Naive thymus-derived CD4-positive, alpha-beta T cell (primary cell): ENCODE measurements at regions of chr3 and their contacts with region 1.

Region 1: GRCh38 chr3:107522510-107523288 is at the start of gene BBX:
- DNase-seq: peak; percentile 88 to 97 (median 97)
- ATAC-seq: peak; percentile 95
- H3K4me3 ChIP-seq: peak within 1 kb of the TSS; percentile 82
- H3K4me3 Mint-ChIP-seq: peak within 1 kb of the TSS; percentile 75 to 100 (median 98)
- H3K27ac ChIP-seq: peak within 1 kb of the TSS; percentile 91
- H3K27ac Mint-ChIP-seq: peak within 1 kb of the TSS; percentile 84 to 99 (median 97)
- H3K4me1 ChIP-seq: peaks cover 9 to 14% of the 10 kb centered on the region in 2 donors
- H3K4me1 Mint-ChIP-seq: peaks cover 17 to 35% (median 30%) of the 10 kb centered on the region in 7 donors
- H3K27me3 ChIP-seq: no peaks in the 10 kb centered on the region
- H3K27me3 Mint-ChIP-seq: peaks cover 0 to 2% (median 0%) of the 10 kb centered on the region in 5 donors
- total RNA-seq, gene BBX: 44.3 to 103 (median 73.5) TPM

Region 2: DNA sequence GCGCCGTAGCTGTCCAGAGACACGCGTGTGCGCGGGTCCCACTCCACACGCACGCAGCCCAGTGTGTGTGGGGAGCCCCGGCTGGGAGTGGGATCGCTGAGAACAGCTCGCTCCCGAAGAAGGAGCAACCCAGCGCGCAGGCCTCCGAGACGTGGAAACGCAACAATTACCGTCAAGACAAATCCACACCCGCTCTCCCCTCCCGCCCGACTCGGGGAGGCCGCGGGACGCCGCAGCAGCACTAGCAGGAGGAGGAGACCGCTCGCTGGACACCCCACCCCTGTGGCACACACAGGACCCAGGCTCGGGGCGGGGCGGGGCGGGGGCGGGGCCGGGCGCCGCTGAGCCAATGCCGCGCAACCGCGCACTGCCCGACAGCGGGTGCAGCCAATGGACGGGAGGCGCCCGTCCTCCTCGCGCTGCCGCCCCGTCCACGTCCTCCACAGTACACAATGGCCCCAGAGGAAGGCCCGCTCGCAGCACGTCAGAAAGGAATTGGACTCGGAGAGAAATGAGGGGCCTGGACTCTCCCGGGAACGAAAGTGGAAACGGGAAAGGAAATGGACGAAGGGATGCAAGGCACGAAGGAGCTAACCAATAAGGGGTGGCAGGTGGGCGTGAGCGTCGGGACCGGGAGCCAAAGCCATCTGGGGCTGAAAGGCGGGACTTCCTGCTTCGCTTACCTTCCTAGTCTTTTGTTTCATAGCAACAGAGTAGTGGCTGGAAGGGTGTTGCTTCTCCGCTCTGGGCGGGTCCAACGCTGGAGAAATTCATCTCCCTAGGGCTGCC is 1653.8 kb before region 1 on chr3 and contains the start of gene CBLB:
- CTCF ChIA-PET with region 1: no interaction called
- POLR2A ChIA-PET with region 1: no interaction called
- intact Hi-C with region 1: loop called in 1 of 2 experiments (anchors 5 kb)
- DNase-seq: peak; percentile 72 to 89 (median 85)
- ATAC-seq: peak; percentile 93
- H3K4me3 ChIP-seq: peak within 1 kb of the TSS; percentile 86
- H3K4me3 Mint-ChIP-seq: peak within 1 kb of the TSS; percentile 89 to 100 (median 97)
- H3K27ac ChIP-seq: peak within 1 kb of the TSS; percentile 91
- H3K27ac Mint-ChIP-seq: peak within 1 kb of the TSS; percentile 89 to 98 (median 94)
- H3K4me1 ChIP-seq: peaks cover 31 to 41% of the 10 kb centered on the region in 2 donors
- H3K4me1 Mint-ChIP-seq: peaks cover 23 to 58% (median 49%) of the 10 kb centered on the region in 7 donors
- H3K27me3 ChIP-seq: no peaks in the 10 kb centered on the region
- H3K27me3 Mint-ChIP-seq: no peaks in the 10 kb centered on the region
- total RNA-seq, gene CBLB: 82.8 to 135 (median 109) TPM

Region 3: DNA sequence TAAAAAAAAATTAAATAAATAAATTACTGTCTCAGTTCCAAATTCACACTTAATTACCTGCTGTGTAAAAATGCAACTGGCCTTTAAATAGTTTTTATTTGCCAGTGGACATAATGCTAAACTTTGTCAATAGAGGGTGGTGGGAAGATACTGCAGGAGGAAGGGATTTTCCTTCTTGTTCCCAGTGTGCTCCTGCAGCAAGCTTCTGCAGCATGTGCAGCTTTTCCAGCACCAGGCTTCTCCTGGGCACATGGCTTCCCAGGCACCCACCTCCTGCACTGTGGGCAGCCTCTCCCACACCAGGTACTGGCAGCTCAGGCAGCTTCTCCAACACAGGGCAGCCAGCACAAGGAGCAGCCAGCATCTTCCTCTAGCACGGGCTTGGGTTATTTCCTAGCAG is 29.6 kb before region 1 on chr3:
- CTCF ChIA-PET with region 1: no interaction called
- POLR2A ChIA-PET with region 1: no interaction called
- intact Hi-C with region 1: loop called in 1 of 2 experiments (anchors 2 kb)
- DNase-seq: no peak
- ATAC-seq: no peak
- H3K4me3 ChIP-seq: no peak overlapping the region
- H3K4me3 Mint-ChIP-seq: no peak overlapping the region
- H3K27ac ChIP-seq: no peak overlapping the region
- H3K27ac Mint-ChIP-seq: no peak overlapping the region
- H3K4me1 ChIP-seq: no peaks in the 10 kb centered on the region
- H3K4me1 Mint-ChIP-seq: peaks cover 0 to 4% (median 0%) of the 10 kb centered on the region in 7 donors
- H3K27me3 ChIP-seq: no peaks in the 10 kb centered on the region
- H3K27me3 Mint-ChIP-seq: peaks cover 0 to 19% (median 7%) of the 10 kb centered on the region in 5 donors

Region 4: GRCh38 chr3:107598926-107599771 is 76.5 kb after region 1 on chr3:
- CTCF ChIA-PET with region 1: no interaction called
- POLR2A ChIA-PET with region 1: interaction called, 6 read pairs
- intact Hi-C with region 1: loop called (anchors 1 kb)
- DNase-seq: peak in 8 of 9 donors; percentile 36 to 59 (median 50)
- ATAC-seq: peak; percentile 93
- H3K4me3 ChIP-seq: peak overlapping the region; percentile 56
- H3K4me3 Mint-ChIP-seq: peak overlapping the region; percentile 79 to 91 (median 86)
- H3K27ac ChIP-seq: peak overlapping the region; percentile 76
- H3K27ac Mint-ChIP-seq: peak overlapping the region; percentile 80 to 90 (median 87)
- H3K4me1 ChIP-seq: peaks cover 24 to 39% of the 10 kb centered on the region in 2 donors
- H3K4me1 Mint-ChIP-seq: peaks cover 45 to 81% (median 72%) of the 10 kb centered on the region in 7 donors
- H3K27me3 ChIP-seq: no peaks in the 10 kb centered on the region
- H3K27me3 Mint-ChIP-seq: no peaks in the 10 kb centered on the region

Region 5: GRCh38 chr3:107927361-107928083 is 404.8 kb after region 1 on chr3:
- CTCF ChIA-PET with region 1: no interaction called
- POLR2A ChIA-PET with region 1: no interaction called
- intact Hi-C with region 1: loop called in 1 of 2 experiments (anchors 5 kb)
- DNase-seq: peak; percentile 39 to 71 (median 57)
- ATAC-seq: peak; percentile 92
- H3K4me3 ChIP-seq: peak overlapping the region; percentile 60
- H3K4me3 Mint-ChIP-seq: peak overlapping the region; percentile 86 to 93 (median 89)
- H3K27ac ChIP-seq: no peak overlapping the region
- H3K27ac Mint-ChIP-seq: peak overlapping the region in 5 of 9 donors; percentile 26 to 88 (median 64)
- H3K4me1 ChIP-seq: peaks cover 5 to 6% of the 10 kb centered on the region in 2 donors
- H3K4me1 Mint-ChIP-seq: peaks cover 9 to 15% (median 13%) of the 10 kb centered on the region in 7 donors
- H3K27me3 ChIP-seq: peaks cover 0 to under 1% of the 10 kb centered on the region in 2 donors
- H3K27me3 Mint-ChIP-seq: peaks cover 0 to 17% (median 4%) of the 10 kb centered on the region in 5 donors

Region 6: DNA sequence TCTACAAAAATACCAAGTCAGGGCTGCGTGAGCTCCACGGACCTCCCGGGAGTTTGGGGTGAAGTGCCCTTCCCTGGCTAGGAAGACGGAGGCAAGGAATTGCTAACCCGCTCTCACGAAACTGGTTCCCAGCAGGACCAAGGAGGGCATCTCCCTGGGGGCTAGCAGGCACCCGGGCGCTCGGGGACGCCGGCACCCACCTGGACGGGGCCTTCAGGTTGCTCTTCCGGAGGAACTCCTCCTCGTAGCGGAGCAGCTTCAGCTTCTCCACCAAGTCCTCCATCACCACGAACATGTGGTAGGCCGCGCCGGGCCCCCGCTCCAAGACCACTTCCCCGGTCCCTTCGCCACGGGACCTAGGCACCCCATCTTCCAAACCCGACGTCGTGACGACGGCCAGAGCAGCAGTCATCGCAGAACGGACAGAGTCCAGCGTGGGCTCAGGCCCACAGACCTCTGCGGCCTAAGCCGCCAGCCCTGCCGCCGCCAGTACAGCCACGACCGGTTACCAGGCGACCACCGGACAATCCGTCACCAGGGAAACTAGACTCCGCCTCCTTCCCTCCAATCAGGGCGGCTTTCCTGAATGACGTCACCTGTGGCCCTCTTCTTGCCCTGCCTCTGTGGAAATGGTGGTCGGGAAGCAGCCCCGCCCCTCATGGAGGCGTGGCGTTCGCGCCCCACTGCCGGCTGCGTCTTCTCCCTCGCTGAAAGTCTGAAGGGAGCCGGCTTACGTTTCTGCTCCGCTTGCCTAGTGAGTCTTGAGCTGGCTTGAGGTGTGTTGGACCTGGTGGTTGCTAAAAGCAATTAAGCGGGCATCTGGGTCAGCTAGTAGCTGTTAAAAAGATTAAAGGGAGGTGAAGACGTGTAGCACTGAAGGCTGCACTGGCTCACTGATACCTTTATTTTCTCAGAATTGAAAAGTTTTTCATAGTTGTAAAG is 699.5 kb after region 1 on chr3 and contains the start of gene IFT57:
- CTCF ChIA-PET with region 1: no interaction called
- POLR2A ChIA-PET with region 1: interaction called, 3 read pairs
- intact Hi-C with region 1: loop called (anchors 2 kb)
- DNase-seq: peak; percentile 89 to 97 (median 96)
- ATAC-seq: peak; percentile 97
- H3K4me3 ChIP-seq: peak within 1 kb of the TSS; percentile 59
- H3K4me3 Mint-ChIP-seq: peak within 1 kb of the TSS; percentile 93 to 99 (median 97)
- H3K27ac ChIP-seq: peak within 1 kb of the TSS; percentile 95
- H3K27ac Mint-ChIP-seq: peak within 1 kb of the TSS; percentile 95 to 100 (median 99)
- H3K4me1 ChIP-seq: peaks cover 21 to 24% of the 10 kb centered on the region in 2 donors
- H3K4me1 Mint-ChIP-seq: peaks cover 27 to 83% (median 62%) of the 10 kb centered on the region in 7 donors
- H3K27me3 ChIP-seq: no peaks in the 10 kb centered on the region
- H3K27me3 Mint-ChIP-seq: no peaks in the 10 kb centered on the region
- total RNA-seq, gene IFT57: 18.0 to 45.4 (median 26.4) TPM

Region 7: GRCh38 chr3:108835101-108835500 is 1312.4 kb after region 1 on chr3:
- CTCF ChIA-PET with region 1: no interaction called
- POLR2A ChIA-PET with region 1: no interaction called
- intact Hi-C with region 1: loop called in 1 of 2 experiments (anchors 5 kb)
- DNase-seq: peak in 7 of 9 donors; percentile 60 to 85 (median 75)
- ATAC-seq: peak; percentile 94
- H3K4me3 ChIP-seq: peak overlapping the region; percentile 43
- H3K4me3 Mint-ChIP-seq: peak overlapping the region; percentile 85 to 100 (median 92)
- H3K27ac ChIP-seq: peak overlapping the region; percentile 78
- H3K27ac Mint-ChIP-seq: peak overlapping the region; percentile 83 to 100 (median 94)
- H3K4me1 ChIP-seq: peaks cover 69% of the 10 kb centered on the region in 2 donors
- H3K4me1 Mint-ChIP-seq: peaks cover 42 to 96% (median 88%) of the 10 kb centered on the region in 7 donors
- H3K27me3 ChIP-seq: no peaks in the 10 kb centered on the region
- H3K27me3 Mint-ChIP-seq: no peaks in the 10 kb centered on the region